ENCODE measurements at regions of chr1 and their contacts with region 1.

Region 1: DNA sequence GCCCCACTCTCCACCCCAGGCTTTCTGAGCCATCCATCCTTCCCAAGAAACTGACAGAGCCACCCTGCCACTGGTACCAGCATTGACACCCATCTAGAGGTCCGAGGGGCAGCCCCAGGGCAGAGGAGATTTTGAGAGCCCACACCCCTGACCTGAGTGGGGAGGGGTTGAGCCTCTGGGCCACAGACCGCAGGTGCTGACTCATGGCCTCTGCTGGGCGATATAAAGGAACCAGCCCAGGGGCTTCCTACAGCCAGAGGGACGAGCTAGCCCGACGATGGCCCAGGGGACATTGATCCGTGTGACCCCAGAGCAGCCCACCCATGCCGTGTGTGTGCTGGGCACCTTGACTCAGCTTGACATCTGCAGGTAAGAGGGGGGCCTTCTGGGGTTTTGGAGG is at the start of gene PADI4:
- DNase-seq: no peak
- ATAC-seq: no peak
- H3K4me3 ChIP-seq: no peak within 1 kb of the TSS
- H3K27ac ChIP-seq: no peak within 1 kb of the TSS
- H3K4me1 ChIP-seq: peaks cover 11% of the 10 kb centered on the region; the same call in 1 of the 2 replicates
- H3K27me3 ChIP-seq: no peaks in the 10 kb centered on the region
- CTCF ChIP-seq: no peak
- total RNA-seq, gene PADI4: not detected

Region 2: GRCh38 chr1:17218939-17219338 is 89.0 kb before region 1 on chr1:
- CTCF ChIA-PET with region 1: interaction called, 16 read pairs
- POLR2A ChIA-PET with region 1: no interaction called
- in situ Hi-C with region 1: no loop called
- intact Hi-C with region 1: no loop called
- DNase-seq: no peak
- ATAC-seq: no peak
- H3K4me3 ChIP-seq: no peak overlapping the region
- H3K27ac ChIP-seq: peak overlapping the region; percentile 48; the same call in 1 of the 2 replicates
- H3K4me1 ChIP-seq: no peaks in the 10 kb centered on the region; the same call in 1 of the 2 replicates
- H3K27me3 ChIP-seq: no peaks in the 10 kb centered on the region
- CTCF ChIP-seq: no peak

Region 3: DNA sequence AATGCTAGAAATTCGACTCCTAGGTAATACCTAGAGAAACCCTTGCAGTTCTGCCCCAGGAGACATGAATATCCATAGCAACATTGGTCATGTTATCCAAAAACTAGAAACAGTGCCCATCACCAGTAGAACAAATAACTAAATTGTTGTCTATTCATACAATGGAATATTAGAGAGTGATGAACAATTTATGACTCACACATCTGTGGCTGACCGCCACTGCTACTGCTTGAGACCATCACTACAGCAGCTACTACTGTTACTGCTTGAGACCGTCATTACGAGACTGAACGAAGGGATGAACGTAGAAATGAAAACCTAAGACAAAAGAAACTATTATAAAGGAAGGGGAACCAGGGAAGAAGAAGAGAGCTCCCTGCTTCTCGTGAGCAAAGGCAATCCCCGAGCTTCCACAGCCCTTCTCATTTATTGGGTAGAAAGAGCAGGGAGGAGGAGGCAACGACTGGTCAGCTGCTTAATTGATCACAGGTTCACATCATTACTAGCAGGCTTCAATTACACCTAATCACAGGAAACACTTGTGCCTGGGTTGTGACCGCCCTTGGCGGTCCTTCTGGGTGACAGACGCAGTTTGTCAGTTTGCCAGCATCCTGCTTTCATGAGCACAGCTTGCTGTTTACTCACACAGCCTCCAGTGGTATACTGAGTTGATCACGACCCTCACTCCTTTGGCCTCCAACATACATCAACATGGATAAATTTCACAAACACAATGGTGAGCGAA is 14.1 kb before region 1 on chr1:
- CTCF ChIA-PET with region 1: no interaction called
- POLR2A ChIA-PET with region 1: interaction called, 13 read pairs
- in situ Hi-C with region 1: no loop called
- intact Hi-C with region 1: no loop called
- DNase-seq: no peak
- ATAC-seq: no peak
- H3K4me3 ChIP-seq: no peak overlapping the region
- H3K27ac ChIP-seq: no peak overlapping the region
- H3K4me1 ChIP-seq: no peaks in the 10 kb centered on the region
- H3K27me3 ChIP-seq: no peaks in the 10 kb centered on the region
- CTCF ChIP-seq: no peak